Dorsolateral prefrontal cortex (tissue), 120 donors: ENCODE measurements at regions of chr14 and their contacts with region 1.

Region 1: GRCh38 chr14:24418492-24418873 is 11.0 kb downstream of the CBLN3 start:
- DNase-seq: no peak
- H3K4me3 ChIP-seq: no peak overlapping the region
- H3K27ac ChIP-seq: no peak overlapping the region
- H3K27me3 ChIP-seq: peaks cover 0 to 16% (median 0%) of the 10 kb centered on the region in 45 donors
- CTCF ChIP-seq: no peak

Region 2: DNA sequence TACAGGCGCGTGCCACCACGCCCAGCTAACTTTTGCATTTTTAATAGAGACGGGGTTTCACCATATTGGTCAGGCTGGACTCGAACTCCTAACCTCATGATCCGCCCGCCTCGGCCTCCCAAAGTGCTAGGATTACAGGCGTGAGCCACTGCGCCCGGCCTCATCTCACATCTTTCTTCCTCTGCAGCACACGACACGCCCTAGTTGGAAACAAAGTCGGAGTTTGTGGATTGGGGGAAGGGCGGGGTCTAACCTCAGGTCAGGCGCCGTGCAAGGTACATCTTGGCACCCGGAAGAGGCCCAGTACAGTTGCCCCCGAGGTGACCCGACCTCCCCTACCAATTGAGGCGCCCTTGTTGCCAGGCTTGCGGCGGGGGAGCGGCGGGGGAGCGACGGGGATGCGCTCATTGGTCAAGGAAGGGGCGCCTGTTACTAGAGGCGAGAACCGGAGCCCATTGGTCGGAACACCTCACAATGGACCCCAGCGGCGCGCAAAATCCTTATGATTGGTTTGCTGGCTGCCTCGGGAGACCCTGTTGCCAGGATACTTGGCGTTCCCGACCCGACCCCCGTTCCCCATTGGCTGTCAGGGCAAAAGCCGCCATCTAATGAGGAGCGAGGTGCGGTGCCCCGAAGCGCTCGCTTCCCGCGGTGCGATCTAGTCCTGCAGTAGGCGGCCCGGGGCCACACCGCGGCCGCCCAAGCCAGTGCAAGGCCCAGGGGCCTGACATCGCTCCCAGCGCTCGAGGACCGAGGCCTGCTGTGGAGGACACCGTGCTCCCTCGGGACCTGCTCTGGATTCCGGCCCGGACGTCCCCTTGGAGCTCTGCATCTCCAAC is 246.8 kb before region 1 on chr14 and contains the start of gene REC8:
- intact Hi-C with region 1: no loop called
- DNase-seq: peak; percentile 84 to 98 (median 96)
- H3K4me3 ChIP-seq: peak within 1 kb of the TSS; percentile 24 to 77 (median 66)
- H3K27ac ChIP-seq: peak within 1 kb of the TSS in 56 of 59 donors; percentile 16 to 86 (median 66)
- H3K27me3 ChIP-seq: no peaks in the 10 kb centered on the region
- CTCF ChIP-seq: peak in 9 of 56 donors; percentile 11 to 38 (median 19)
- total RNA-seq, gene REC8: 15.6 to 54.3 (median 25.4) TPM

Region 3: DNA sequence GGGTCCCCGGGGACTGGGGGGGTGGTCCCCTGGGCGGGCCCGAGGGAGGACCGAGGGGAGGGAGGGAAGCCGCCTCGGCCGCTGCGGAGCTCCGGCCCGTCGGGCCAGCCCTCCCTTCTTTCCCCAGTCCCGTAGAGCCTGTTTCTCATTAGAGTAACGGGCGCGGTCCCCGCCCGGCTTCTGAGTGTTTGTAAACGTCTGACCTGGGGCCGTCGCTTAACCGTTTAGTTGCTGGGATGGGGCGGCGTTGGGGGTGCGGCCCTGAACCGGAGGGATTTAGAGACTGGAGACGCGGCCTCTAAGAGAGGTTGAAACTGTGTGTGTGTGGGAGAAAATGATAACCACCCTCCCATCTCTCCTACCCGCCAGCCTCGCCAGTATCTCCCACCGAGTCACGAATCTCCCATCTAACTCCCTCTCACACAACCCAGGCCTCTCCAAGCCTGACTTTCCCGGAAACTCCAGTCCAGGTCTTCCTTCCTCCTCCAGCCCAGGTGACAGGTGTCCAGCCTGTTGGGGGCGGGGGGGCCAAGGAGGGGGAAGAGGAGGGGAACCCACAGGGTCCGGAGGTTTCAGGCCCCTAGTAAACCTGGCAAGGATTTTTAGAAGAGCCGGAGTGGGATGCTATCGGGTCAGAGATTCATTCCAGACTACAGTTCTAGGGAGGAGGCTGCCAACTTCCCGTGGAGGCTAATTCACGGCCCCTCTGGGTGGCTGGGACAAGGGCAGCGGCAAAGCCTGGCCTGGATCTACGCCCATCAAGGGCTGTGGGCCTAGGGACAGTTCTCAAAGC is 51.6 kb before region 1 on chr14:
- intact Hi-C with region 1: loop called in 1 of 2 experiments (anchors 5 kb)
- DNase-seq: peak in 4 of 10 donors; percentile 45 to 90 (median 49)
- H3K4me3 ChIP-seq: peak overlapping the region; percentile 7 to 71 (median 53)
- H3K27ac ChIP-seq: peak overlapping the region in 57 of 59 donors; percentile 12 to 90 (median 76)
- H3K27me3 ChIP-seq: peaks cover 0 to 17% (median 0%) of the 10 kb centered on the region in 45 donors
- CTCF ChIP-seq: no peak